ENCODE measurements at regions of chr7 and their contacts with region 1.

Region 1: GRCh38 chr7:92528188-92528957 is at the starts of genes PEX1 and RBM48:
- DNase-seq: peak; percentile 96
- H3K4me3 Mint-ChIP-seq: peak within 1 kb of the TSS; percentile 87
- H3K27ac Mint-ChIP-seq: peak within 1 kb of the TSS; percentile 91
- H3K4me1 Mint-ChIP-seq: peaks cover 31% of the 10 kb centered on the region
- H3K27me3 Mint-ChIP-seq: no peaks in the 10 kb centered on the region
- total RNA-seq, gene PEX1: 15.0 to 16.4 TPM
- total RNA-seq, gene RBM48: 15.0 to 17.8 TPM

Region 2: DNA sequence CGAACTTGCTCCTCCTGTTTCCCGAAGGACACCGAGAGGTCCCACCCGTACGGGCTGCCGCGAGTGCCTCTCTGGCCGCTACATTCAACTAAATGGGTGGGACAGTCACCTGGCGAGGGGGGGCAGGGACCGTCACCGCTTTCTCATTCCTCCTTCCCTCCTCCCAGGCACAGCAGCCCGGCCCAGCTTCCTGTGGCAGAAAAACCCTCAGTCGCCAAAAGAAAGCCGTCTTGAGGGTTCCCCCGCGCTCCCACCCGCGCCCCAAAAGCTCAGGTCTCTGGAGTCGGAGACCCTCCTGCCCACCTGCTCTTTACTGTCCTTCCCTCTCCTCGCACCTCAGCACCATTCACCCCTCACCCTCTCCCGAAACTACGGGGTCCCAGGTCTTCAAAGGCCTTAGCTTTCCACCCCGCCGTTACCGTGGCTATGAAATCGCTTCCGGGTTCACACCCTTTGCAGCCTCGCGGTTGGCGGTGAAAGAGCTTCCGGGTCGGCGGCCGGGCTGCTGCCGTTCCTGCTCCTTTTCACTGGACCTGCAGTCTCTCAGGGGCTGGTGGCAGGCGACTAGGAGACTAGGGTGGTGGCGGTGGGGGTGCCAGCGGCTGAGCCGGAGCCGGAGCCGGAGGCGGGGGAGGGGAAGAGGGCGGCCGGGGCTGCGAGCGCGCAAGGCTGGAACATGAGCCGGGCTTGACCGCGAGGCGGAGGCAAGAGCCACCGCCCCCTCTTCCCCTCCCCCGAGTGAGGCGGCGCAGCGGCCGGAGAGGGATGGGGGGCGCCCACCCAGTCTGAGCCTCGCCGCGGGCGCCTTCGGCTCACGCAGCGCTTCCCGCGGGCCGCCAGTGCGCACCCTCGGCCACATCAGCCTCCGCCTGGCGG is 282.6 kb before region 1 on chr7 and contains the starts of genes ANKIB1 and KRIT1:
- CTCF ChIA-PET with region 1: no interaction called
- POLR2A ChIA-PET with region 1: interaction called, 22 read pairs
- DNase-seq: peak; percentile 89
- H3K4me3 Mint-ChIP-seq: peak within 1 kb of the TSS; percentile 98
- H3K27ac Mint-ChIP-seq: peak within 1 kb of the TSS; percentile 97
- H3K4me1 Mint-ChIP-seq: peaks cover 45% of the 10 kb centered on the region
- H3K27me3 Mint-ChIP-seq: no peaks in the 10 kb centered on the region
- total RNA-seq, gene ANKIB1: 65.1 to 70.2 TPM
- total RNA-seq, gene KRIT1: 39.5 to 42.4 TPM

Region 3: DNA sequence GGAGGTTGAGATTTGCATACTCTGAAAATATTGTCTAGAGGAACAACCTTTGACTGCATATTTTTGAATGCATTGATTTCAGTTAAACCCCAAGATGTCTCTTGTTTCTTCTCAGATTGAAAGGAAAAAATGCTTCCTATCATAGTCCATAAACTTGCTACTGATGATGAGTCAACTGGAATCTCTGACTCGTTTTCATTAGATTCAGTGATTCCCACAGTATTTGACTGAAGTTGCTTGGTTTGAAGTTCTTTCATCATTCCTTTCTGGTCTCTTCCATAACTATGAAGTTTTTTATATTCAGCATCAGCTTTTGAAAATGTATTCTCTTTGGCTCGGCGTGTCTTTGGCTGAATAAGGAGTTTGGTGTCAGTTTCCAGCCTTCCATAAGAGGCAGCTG is 10.7 kb before region 1 on chr7:
- CTCF ChIA-PET with region 1: interaction called, 8 read pairs
- POLR2A ChIA-PET with region 1: interaction called, 11 read pairs
- DNase-seq: no peak
- H3K4me3 Mint-ChIP-seq: no peak overlapping the region
- H3K27ac Mint-ChIP-seq: no peak overlapping the region
- H3K4me1 Mint-ChIP-seq: no peaks in the 10 kb centered on the region
- H3K27me3 Mint-ChIP-seq: no peaks in the 10 kb centered on the region

Region 4: DNA sequence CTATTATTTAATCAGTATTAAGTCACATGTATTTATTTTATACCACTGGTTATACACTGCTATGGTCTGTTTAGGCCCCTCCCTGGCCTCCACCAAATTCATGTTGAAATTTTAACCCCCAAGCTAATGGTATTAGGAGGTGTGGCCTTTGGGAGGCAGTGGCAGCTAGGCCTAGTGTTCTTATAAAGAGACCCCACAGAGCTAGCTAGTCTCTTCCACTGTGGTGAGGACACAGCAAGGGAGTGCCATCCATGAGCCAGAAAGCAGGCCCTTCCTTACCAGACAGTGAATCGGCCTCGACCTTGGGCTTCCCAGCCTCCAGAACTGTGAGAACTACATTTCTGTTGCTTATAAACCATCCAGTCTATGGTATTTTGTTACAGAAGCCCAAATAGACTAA is 28.9 kb after region 1 on chr7:
- CTCF ChIA-PET with region 1: interaction called, 10 read pairs
- POLR2A ChIA-PET with region 1: interaction called, 5 read pairs
- DNase-seq: no peak
- H3K4me3 Mint-ChIP-seq: no peak overlapping the region
- H3K27ac Mint-ChIP-seq: no peak overlapping the region
- H3K4me1 Mint-ChIP-seq: no peaks in the 10 kb centered on the region
- H3K27me3 Mint-ChIP-seq: no peaks in the 10 kb centered on the region

Region 5: GRCh38 chr7:92584996-92585395 is 56.6 kb after region 1 on chr7:
- CTCF ChIA-PET with region 1: interaction called, 18 read pairs
- POLR2A ChIA-PET with region 1: interaction called, 30 read pairs
- DNase-seq: no peak
- H3K4me3 Mint-ChIP-seq: no peak overlapping the region
- H3K27ac Mint-ChIP-seq: peak overlapping the region; percentile 60
- H3K4me1 Mint-ChIP-seq: peaks cover 58% of the 10 kb centered on the region
- H3K27me3 Mint-ChIP-seq: no peaks in the 10 kb centered on the region

Region 6: DNA sequence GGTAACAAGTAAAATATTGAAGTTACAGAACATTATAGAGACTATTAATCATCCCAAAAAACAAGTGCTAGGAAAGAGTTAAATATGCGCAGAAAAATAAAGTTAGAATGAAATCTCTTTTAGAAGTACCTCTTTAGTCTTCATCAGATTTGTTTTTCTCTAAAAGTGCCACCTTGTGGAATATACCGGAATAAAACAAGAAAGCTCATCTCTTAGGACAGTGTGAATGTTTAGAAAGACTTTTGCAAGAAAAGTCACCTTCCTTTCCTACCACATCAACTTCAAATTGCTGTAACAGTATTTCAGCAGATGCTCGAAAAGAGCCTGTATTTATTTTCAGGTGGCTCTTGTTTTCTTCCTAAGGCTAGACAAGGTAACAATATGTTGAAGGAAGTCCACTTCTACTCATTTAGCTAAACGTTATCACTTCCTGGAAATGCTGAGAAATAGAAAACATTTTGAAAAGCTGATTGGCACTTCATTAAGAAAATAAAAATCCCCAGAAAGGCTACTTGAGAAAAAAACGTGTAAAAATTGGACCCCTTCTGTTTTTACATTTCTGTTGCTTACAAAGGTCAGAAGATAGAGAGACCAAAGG is 81.6 kb after region 1 on chr7:
- CTCF ChIA-PET with region 1: interaction called, 14 read pairs
- POLR2A ChIA-PET with region 1: interaction called, 10 read pairs
- DNase-seq: no peak
- H3K4me3 Mint-ChIP-seq: no peak overlapping the region
- H3K27ac Mint-ChIP-seq: peak overlapping the region; percentile 68
- H3K4me1 Mint-ChIP-seq: peaks cover 46% of the 10 kb centered on the region
- H3K27me3 Mint-ChIP-seq: no peaks in the 10 kb centered on the region

Region 7: GRCh38 chr7:93117852-93118530 is 589.6 kb after region 1 on chr7 and contains the start of gene SAMD9:
- CTCF ChIA-PET with region 1: no interaction called
- POLR2A ChIA-PET with region 1: interaction called, 17 read pairs
- DNase-seq: peak; percentile 72
- H3K4me3 Mint-ChIP-seq: peak within 1 kb of the TSS; percentile 98
- H3K27ac Mint-ChIP-seq: peak within 1 kb of the TSS; percentile 93
- H3K4me1 Mint-ChIP-seq: peaks cover 52% of the 10 kb centered on the region
- H3K27me3 Mint-ChIP-seq: no peaks in the 10 kb centered on the region
- total RNA-seq, gene SAMD9: 92.0 to 94.9 TPM

Measured in activated CD4-positive, alpha-beta memory T cell treated with anti-CD3 and anti-CD28 coated beads, Interleukin-2, amount 10 ng/mL, durations not matched to agents 7 days and 5 days (primary cell).